Adrenal gland (tissue), 19 donors: ENCODE measurements at regions of chr14 and their contacts with region 1.

Region 1: GRCh38 chr14:21191809-21192446 is 36.1 kb upstream of the OR5AU1 start:
- DNase-seq: peak; percentile 66 to 86 (median 80)
- H3K4me3 ChIP-seq: peak overlapping the region in 2 of 4 donors; percentile 2 to 47
- H3K27ac ChIP-seq: no peak overlapping the region
- H3K4me1 ChIP-seq: peaks cover 5 to 7% of the 10 kb centered on the region in 2 donors
- H3K27me3 ChIP-seq: no peaks in the 10 kb centered on the region
- CTCF ChIP-seq: no peak
- POLR2A ChIP-seq: no peak

Region 2: DNA sequence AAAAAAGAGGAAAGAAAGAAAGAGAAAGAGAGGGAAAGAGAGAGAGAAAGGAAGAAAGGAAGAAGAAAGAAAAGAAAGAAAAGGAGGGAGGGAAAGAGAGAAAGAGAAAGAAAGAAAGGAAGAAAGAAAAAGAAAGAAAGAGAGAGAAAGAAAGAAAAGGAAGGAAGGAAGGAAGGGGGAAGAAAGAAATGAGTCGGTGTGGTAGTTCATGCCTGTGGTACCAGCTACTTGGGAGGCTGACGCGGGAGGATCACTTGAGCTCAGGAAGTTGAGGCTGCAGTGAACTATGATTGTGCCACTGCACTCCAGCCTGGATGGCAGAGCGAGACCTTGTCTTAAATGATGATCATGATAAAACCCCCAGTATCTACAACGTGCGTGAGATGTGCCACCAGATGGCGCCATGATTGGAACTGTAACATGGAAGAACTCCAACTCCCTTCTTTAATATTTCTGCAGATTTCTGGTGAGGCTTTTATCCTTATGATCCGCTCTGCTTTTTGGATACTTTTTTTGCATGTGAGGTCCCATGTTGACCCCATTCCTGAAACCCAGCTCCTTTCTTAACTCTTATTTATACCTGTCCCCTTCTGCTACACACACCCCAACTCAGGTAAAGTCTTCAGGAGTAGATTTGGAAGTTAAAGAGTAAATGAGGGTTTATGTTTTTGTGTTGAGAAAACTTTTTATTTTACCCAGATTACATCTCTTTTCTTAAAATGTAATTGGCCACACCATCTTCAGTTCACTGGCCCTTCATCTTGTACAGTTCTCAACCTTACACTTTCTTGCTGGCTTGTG is 661.0 kb before region 1 on chr14:
- intact Hi-C with region 1: no loop called
- DNase-seq: peak; percentile 70 to 92 (median 85)
- H3K4me3 ChIP-seq: no peak overlapping the region
- H3K27ac ChIP-seq: no peak overlapping the region
- H3K4me1 ChIP-seq: no peaks in the 10 kb centered on the region
- H3K27me3 ChIP-seq: no peaks in the 10 kb centered on the region
- CTCF ChIP-seq: peak; percentile 49 to 72 (median 60)
- POLR2A ChIP-seq: no peak

Region 3: DNA sequence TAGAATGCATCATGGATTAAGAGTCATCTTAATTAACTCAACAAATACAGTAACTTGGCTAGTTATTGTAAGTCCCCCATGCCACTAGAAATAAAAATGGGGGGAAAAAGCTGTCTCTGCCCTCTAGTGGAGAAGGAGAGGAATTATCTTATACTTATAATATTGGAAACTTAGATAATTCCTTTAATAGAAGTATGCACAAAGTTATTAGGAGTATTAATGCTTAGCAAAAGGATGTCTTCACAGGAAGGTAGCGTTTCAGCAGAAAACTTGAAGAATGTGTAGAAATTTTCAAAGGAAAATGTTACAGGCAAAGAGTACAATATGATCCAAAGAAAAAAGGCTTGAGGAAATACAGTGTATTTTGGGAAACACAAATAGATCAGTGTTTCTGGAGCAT is 55.9 kb before region 1 on chr14:
- intact Hi-C with region 1: loop called in 1 of 2 experiments (anchors 10 kb)
- DNase-seq: no peak
- H3K4me3 ChIP-seq: no peak overlapping the region
- H3K27ac ChIP-seq: no peak overlapping the region
- H3K4me1 ChIP-seq: no peaks in the 10 kb centered on the region
- H3K27me3 ChIP-seq: no peaks in the 10 kb centered on the region
- CTCF ChIP-seq: peak; percentile 36 to 72 (median 63)
- POLR2A ChIP-seq: no peak